HCT116 (cell line): ENCODE measurements at regions of chr12 and their contacts with region 1.

Region 1: DNA sequence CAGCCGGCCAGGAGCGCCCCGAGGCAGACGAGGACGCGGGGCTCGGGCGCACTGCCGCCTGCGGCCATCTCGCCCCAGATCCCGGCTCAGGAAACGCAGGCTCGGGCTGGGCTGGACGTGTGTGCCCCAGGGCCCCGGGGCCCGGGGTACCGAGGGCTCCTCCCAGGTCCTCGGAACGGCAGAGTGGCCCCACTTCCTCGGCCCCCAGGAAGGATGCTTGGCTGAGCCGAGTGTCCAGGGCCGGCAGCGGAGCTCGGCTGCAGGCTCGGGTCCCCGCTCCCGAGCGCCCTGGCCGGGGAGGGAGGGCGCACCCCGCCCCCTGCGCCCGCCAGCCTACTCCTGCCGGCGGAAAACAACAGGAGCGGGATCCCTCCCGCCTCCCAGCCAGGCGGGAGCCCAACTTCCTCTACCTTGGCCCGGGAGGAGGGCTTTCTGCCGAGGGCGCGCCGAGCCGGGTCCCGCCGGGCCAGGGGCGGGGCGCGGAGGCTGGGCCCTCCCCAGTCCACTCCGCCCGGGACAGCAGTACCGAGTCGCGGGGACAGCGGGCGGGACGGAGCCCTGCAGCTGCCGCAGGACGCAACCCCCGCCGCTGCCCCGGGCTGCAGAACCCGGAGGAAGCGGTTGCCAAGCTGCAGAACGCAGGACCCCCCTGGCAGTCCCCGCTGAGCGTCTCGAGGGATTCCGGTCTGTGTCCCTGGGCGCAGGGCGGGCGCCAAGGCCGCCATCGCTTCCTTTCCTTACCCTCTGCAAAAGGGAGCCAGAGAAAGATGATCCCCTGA is at the start of gene VSIG10:
- DNase-seq: no peak
- ATAC-seq: peak; percentile 85
- H3K4me3 ChIP-seq: peak within 1 kb of the TSS; percentile 79 to 83
- H3K27ac ChIP-seq: peak within 1 kb of the TSS; percentile 95
- H3K4me1 ChIP-seq: peaks cover 28 to 50% of the 10 kb centered on the region in 2 experiments
- H3K27me3 ChIP-seq: no peaks in the 10 kb centered on the region
- CTCF ChIP-seq: no peak
- POLR2A ChIP-seq: peak; percentile 41
- RAD21 ChIP-seq: no peak
- total RNA-seq, gene VSIG10: 42.6 TPM

Region 2: DNA sequence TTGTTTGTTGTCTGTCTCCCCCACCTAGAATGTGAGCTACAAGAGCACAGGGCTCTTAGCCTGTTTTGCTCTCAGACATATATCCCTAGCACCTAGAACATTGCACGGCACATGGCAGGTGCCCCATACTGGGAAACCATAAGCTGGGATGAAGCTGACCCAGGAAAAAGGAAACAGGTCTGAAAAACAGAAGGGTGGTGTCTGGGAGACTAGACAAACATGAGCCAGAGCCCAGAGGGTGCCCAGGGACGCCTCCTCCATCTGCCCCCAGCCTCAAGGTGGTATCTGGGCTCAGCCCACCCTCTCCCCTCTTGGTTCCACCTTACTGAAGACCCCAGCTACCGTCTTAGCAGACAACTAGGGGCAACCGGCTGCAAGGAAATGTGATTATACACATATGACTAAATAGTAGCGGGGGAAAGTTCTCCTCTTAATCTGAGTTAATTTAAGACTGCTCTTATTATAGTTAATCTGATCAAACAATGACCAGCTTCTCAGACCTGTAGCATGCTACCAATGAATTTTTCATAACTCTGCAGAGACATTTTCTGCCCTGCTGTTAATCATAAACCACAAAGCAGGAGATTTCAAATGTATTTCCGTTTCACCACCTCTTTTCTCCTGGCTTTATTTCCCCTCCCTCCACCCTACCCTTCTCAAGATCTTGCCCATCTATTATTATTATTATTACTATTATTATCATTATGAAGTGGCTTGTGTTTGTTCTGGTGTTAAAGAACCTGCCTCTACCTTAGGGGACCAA is 166.9 kb before region 1 on chr12:
- CTCF ChIA-PET with region 1: no interaction called
- POLR2A ChIA-PET with region 1: no interaction called
- RAD21 ChIA-PET with region 1: no interaction called
- intact Hi-C with region 1: no loop called
- DNase-seq: no peak
- ATAC-seq: no peak
- H3K4me3 ChIP-seq: no peak overlapping the region
- H3K27ac ChIP-seq: no peak overlapping the region
- H3K4me1 ChIP-seq: peaks cover 10 to 23% of the 10 kb centered on the region in 2 experiments
- H3K27me3 ChIP-seq: no peaks in the 10 kb centered on the region
- CTCF ChIP-seq: no peak
- POLR2A ChIP-seq: no peak
- RAD21 ChIP-seq: no peak

Region 3: DNA sequence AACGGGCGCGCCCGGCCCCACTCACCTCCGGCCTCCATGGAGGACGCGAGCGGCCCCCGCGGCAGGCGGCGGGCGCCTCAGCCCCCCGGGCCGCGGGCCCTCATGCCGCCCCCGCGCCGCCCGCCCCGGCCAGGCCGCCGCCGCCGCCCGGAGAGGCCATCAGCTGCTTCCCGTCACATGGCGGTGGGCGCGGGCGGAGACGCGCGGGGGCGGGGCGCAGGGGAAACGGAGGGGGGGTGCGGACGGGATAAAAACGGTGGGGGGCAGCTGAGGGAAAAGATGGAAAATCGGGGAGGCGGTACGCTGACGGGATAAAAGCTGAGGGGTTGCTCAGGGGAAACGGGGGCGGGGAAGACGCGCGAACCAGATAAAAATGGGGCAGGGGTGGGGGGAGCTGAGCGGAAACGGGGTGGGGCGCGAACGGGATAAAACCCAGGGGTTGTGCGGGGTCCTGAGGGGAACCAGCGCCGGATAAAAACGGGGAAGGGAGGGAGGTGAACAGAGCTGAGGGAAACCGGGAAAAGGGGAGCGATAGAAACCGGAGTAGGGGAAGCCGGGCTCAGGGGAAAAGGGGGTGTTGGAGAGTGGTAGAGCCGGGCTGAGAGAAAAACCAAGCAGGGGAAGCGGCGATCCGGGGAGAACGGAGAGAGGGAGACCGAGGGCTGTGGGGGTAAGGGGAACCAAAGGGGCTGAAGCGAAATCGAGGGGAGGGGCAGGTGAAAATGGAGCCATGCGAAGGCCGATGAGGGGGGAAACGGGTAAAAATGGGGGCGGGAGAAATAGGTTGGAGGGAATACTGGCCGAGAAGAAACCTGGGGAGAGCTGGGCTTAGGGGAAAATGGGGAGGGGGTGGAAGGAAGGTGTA is 42.5 kb before region 1 on chr12 and contains the start of gene WSB2:
- CTCF ChIA-PET with region 1: no interaction called
- POLR2A ChIA-PET with region 1: no interaction called
- RAD21 ChIA-PET with region 1: no interaction called
- intact Hi-C with region 1: loop called (anchors 5 kb)
- DNase-seq: no peak
- ATAC-seq: peak; percentile 41
- H3K4me3 ChIP-seq: peak within 1 kb of the TSS; percentile 64 to 81
- H3K27ac ChIP-seq: peak within 1 kb of the TSS; percentile 91
- H3K4me1 ChIP-seq: peaks cover 28 to 39% of the 10 kb centered on the region in 2 experiments
- H3K27me3 ChIP-seq: no peaks in the 10 kb centered on the region
- CTCF ChIP-seq: no peak
- POLR2A ChIP-seq: no peak
- RAD21 ChIP-seq: no peak
- total RNA-seq, gene WSB2: 97.0 TPM